OCI-LY7 (cell line): ENCODE measurements at regions of chr2 and their contacts with region 1.

Region 1: DNA sequence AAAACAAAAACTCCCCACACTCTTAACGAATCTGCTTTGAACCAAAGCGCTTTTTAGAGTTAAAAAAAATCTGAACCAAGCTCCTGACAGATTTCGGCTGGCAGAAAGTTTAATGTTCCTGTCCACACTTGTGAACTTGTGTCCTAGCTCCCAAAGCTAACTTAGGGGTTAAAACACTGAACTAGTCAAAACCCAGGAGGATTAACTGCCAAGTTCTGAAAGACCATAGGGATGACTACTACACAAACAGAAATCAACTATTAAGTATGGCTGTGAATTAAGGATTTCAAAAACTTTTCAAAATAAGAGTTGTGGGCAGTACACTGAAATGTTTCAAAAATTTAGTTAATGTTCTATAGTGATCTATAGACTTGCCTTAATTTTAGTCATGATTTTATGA is 26.2 kb upstream of the CDKL4 start:
- DNase-seq: no peak
- H3K4me3 ChIP-seq: no peak overlapping the region
- H3K27ac ChIP-seq: no peak overlapping the region
- H3K4me1 ChIP-seq: peaks cover 20% of the 10 kb centered on the region
- CTCF ChIP-seq: no peak

Region 2: DNA sequence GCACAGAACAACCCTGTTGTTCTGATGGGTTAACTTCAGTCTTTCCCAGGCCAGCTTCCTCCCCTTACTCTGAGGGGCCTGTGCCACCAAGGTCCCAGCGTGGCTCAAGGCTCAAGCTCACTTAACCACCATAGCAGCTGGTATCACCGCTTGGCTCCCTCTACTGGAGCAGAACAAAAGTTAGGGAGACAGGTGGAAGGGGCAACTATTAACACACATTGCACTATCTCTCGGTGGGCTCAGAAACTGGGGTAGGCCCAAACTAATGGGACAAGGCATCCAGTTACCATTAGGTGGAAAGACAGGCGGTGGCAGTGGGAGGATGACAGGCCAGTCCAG is 804.2 kb before region 1 on chr2:
- CTCF ChIA-PET with region 1: no interaction called
- POLR2A ChIA-PET with region 1: no interaction called
- intact Hi-C with region 1: no loop called
- DNase-seq: peak; percentile 88
- H3K4me3 ChIP-seq: no peak overlapping the region
- H3K27ac ChIP-seq: peak overlapping the region; percentile 13
- H3K4me1 ChIP-seq: peaks cover 24% of the 10 kb centered on the region
- CTCF ChIP-seq: peak; percentile 90

Region 3: DNA sequence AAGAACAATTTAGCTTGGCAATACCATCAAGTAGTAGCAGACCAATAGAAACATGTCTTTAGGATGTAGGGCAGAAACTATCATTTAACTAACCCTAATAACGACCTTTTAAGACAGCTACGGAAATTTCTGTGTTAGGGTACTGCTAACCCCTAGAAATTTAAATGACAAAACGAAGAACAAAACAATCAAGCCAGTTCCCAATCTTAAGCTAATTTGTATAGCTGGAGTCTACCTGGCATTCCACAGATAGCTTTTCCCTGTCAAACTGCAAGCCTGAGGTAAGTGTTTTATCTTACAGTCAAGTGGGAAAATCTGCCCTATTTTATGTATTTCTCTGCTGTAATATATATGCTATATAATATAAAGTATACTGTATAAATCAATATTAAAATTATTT is 11.4 kb after region 1 on chr2:
- CTCF ChIA-PET with region 1: no interaction called
- POLR2A ChIA-PET with region 1: interaction called, 11 read pairs
- intact Hi-C with region 1: no loop called
- DNase-seq: no peak
- H3K4me3 ChIP-seq: no peak overlapping the region
- H3K27ac ChIP-seq: no peak overlapping the region
- H3K4me1 ChIP-seq: no peaks in the 10 kb centered on the region
- CTCF ChIP-seq: no peak

Region 4: GRCh38 chr2:39325966-39326365 is 56.0 kb after region 1 on chr2:
- CTCF ChIA-PET with region 1: no interaction called
- POLR2A ChIA-PET with region 1: no interaction called
- intact Hi-C with region 1: no loop called
- DNase-seq: no peak
- H3K4me3 ChIP-seq: no peak overlapping the region
- H3K27ac ChIP-seq: no peak overlapping the region
- H3K4me1 ChIP-seq: no peaks in the 10 kb centered on the region
- CTCF ChIP-seq: no peak